ENCODE measurements at regions of chr11 and their contacts with region 1.

Region 1: DNA sequence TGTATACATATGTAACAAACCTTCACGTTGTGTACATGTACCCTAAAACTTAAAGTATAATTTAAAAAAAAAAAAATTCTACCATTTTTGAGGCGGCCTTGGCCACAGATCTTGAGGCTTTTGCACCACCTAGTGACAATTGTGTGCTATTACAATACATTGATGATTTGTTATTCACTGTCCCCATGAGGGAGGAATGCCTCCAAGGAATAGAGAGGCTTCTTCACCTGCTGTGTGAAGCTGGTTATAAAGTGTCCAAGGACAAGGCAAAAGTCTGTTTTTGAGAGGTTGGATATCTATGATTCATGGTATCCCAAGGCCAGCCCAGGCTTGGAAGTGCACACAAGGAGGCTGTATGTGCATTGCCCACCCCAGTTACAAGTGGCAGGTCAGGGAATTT is 30.7 kb downstream of the SLC22A25 start:
- DNase-seq: peak; percentile 24
- H3K4me3 Mint-ChIP-seq: no peak overlapping the region
- H3K27ac Mint-ChIP-seq: no peak overlapping the region
- H3K4me1 Mint-ChIP-seq: no peaks in the 10 kb centered on the region
- H3K27me3 Mint-ChIP-seq: peaks cover 72% of the 10 kb centered on the region
- CTCF ChIP-seq: peak; percentile 34

Region 2: GRCh38 chr11:63032457-63032856 is 180.3 kb before region 1 on chr11:
- CTCF ChIA-PET with region 1: interaction called, 4 read pairs
- intact Hi-C with region 1: loop called (anchors 1 kb)
- DNase-seq: no peak
- H3K4me3 Mint-ChIP-seq: no peak overlapping the region
- H3K27ac Mint-ChIP-seq: no peak overlapping the region
- H3K4me1 Mint-ChIP-seq: peaks cover 8% of the 10 kb centered on the region
- H3K27me3 Mint-ChIP-seq: peaks cover 85% of the 10 kb centered on the region
- CTCF ChIP-seq: no peak

Region 3: GRCh38 chr11:63132985-63133775 is 79.6 kb before region 1 on chr11:
- CTCF ChIA-PET with region 1: no interaction called
- intact Hi-C with region 1: loop called (anchors 1 kb)
- DNase-seq: no peak
- H3K4me3 Mint-ChIP-seq: no peak overlapping the region
- H3K27ac Mint-ChIP-seq: no peak overlapping the region
- H3K4me1 Mint-ChIP-seq: no peaks in the 10 kb centered on the region
- H3K27me3 Mint-ChIP-seq: peaks cover 90% of the 10 kb centered on the region
- CTCF ChIP-seq: no peak

Measured in Calu3 (cell line).